ENCODE measurements at regions of chr11 and their contacts with region 1.

Region 1: DNA sequence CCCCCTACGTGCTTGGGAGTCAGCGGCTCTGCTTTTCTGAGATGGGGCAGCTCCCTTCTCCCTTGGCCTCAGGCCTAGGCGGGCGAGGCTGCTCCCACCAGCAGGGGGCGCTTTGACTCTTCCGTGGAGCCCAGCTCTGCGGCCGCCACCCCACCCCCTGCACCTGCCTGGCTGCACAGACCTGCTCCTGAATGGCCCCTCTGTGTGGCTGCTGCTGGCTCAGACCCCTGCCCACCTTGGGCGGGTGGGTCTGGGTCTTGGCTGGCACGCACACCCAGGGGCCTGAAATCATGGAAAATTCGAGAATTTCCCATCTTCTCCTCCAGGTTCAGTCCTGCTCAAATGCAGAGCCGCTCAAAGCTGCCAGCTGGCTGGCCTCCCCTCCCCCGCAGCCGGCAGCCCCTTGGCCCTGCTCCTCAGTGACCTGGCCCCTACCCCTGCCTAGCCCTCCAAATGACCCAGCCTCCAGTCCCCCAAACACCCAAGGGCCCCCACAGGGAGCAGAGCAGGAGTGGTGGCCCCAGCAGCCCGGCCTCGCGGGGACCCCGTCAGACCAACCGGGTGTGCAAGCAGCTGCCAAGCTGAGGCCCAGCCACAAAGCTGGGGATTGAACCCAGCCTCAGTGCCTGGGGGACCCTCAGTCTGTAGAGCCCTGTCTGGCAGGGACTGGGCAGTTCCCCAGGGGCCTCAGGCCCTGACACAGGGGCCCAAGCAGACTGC is 9.0 kb downstream of the PRR33 start:
- DNase-seq: peak; percentile 73 to 89
- ATAC-seq: peak; percentile 85 to 97
- H3K4me3 ChIP-seq: no peak overlapping the region
- H3K27ac ChIP-seq: no peak overlapping the region; a peak in 1 of 6 replicates
- H3K4me1 ChIP-seq: no peaks in the 10 kb centered on the region
- CTCF ChIP-seq: peak; percentile 81
- EP300 ChIP-seq: no peak
- POLR2A ChIP-seq: no peak
- RAD21 ChIP-seq: peak; percentile 87 to 89

Region 2: GRCh38 chr11:1837171-1838076 is 45.3 kb before region 1 on chr11:
- CTCF ChIA-PET with region 1: interaction called, 36 read pairs
- POLR2A ChIA-PET with region 1: no interaction called
- DNase-seq: peak; percentile 59 to 70
- ATAC-seq: peak; percentile 46 to 87
- H3K4me3 ChIP-seq: no peak overlapping the region
- H3K27ac ChIP-seq: peak overlapping the region in 1 of 2 experiments; percentile 73; a peak in 3 of 6 replicates
- H3K4me1 ChIP-seq: peaks cover 24% of the 10 kb centered on the region
- CTCF ChIP-seq: peak; percentile 89
- EP300 ChIP-seq: no peak
- POLR2A ChIP-seq: no peak
- RAD21 ChIP-seq: peak; percentile 93 to 97

Region 3: GRCh38 chr11:1852877-1853276 is 29.8 kb before region 1 on chr11 and contains the start of gene LSP1:
- CTCF ChIA-PET with region 1: interaction called, 30 read pairs
- POLR2A ChIA-PET with region 1: no interaction called
- DNase-seq: no peak
- ATAC-seq: no peak
- H3K4me3 ChIP-seq: no peak within 1 kb of the TSS
- H3K27ac ChIP-seq: no peak within 1 kb of the TSS
- H3K4me1 ChIP-seq: no peaks in the 10 kb centered on the region
- CTCF ChIP-seq: no peak
- EP300 ChIP-seq: no peak
- POLR2A ChIP-seq: no peak
- RAD21 ChIP-seq: no peak
- polyA plus RNA-seq, gene LSP1: 0.42 and 0.67 TPM in 2 replicates

Region 4: GRCh38 chr11:1896923-1897322 is 14.2 kb after region 1 on chr11:
- CTCF ChIA-PET with region 1: interaction called, 18 read pairs
- POLR2A ChIA-PET with region 1: no interaction called
- DNase-seq: no peak
- ATAC-seq: no peak
- H3K4me3 ChIP-seq: no peak overlapping the region
- H3K27ac ChIP-seq: no peak overlapping the region
- H3K4me1 ChIP-seq: no peaks in the 10 kb centered on the region
- CTCF ChIP-seq: no peak
- EP300 ChIP-seq: no peak
- POLR2A ChIP-seq: no peak
- RAD21 ChIP-seq: no peak

Region 5: DNA sequence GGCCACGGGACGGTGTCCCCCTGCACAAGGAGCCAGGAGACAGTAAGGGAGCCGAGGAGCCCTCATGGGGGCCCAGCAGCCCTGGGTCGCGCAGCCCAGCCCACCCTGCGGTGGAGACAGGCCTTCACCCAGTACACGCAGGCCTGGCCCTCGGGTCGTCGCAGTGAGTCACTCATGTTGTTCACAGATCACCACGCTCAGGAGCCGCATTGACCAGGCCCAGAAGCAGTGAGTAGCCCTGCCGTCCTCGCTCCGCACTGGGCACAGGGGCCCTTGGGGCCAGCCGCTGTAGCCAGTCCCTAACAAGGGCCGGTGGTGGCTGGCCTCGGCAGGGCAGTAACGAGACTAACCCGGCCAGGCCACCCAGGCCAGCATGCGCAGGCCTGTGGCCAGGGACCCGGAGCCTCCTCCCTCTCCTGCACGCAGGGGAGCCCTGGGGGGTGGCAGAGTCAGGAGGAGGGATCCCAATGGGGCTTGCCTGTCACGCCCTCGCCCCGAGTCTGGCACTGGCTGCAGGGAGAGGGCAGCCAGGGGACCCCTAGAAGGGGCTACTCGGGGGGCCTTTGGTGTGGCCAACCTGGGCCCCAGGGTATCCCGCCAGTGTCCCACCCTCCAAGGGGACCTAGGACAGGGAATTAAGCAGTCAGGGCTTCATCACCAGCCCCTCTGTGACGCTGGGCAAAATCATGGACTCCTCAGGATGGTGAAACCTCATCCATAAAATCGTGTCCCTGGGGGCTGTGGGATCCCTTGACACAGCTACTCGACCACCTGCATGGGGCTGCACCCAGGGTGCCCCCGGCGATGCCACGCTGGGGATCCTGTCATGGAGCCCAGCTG is 54.3 kb after region 1 on chr11:
- CTCF ChIA-PET with region 1: interaction called, 11 read pairs
- POLR2A ChIA-PET with region 1: no interaction called
- DNase-seq: no peak
- ATAC-seq: peak; percentile 29 to 40; a peak in 3 of 6 replicates
- H3K4me3 ChIP-seq: no peak overlapping the region
- H3K27ac ChIP-seq: no peak overlapping the region
- H3K4me1 ChIP-seq: no peaks in the 10 kb centered on the region
- CTCF ChIP-seq: no peak
- EP300 ChIP-seq: no peak
- POLR2A ChIP-seq: no peak
- RAD21 ChIP-seq: no peak

Region 6: GRCh38 chr11:1953489-1954266 is 71.0 kb after region 1 on chr11:
- CTCF ChIA-PET with region 1: interaction called, 49 read pairs
- POLR2A ChIA-PET with region 1: no interaction called
- DNase-seq: no peak
- ATAC-seq: peak; percentile 86 to 95
- H3K4me3 ChIP-seq: no peak overlapping the region
- H3K27ac ChIP-seq: no peak overlapping the region
- H3K4me1 ChIP-seq: no peaks in the 10 kb centered on the region
- CTCF ChIP-seq: peak; percentile 22; the same call in 2 of the 3 replicates
- EP300 ChIP-seq: no peak
- POLR2A ChIP-seq: no peak
- RAD21 ChIP-seq: no peak

Region 7: DNA sequence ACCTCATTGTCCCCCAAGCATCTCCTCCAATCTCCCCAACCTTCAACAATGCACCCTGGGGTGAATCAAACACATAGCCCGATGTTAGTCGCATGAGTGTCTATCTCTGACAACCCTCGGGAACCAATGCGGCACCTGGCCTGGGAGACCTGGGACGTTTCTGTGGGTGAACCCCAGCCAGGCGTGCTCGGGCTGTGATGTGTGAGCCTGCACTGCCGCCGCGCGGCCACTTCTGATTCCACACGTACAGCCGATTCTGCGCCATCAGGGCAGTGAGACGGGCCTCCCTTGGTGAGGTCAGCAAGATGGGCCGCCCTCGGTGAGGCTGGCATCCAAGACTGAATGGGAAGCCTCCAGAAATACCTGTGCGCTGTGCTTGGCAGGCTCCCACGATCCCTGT is 120.1 kb after region 1 on chr11:
- CTCF ChIA-PET with region 1: interaction called, 20 read pairs
- POLR2A ChIA-PET with region 1: interaction called, 6 read pairs
- DNase-seq: no peak
- ATAC-seq: peak; percentile 49 to 72; a peak in 4 of 6 replicates
- H3K4me3 ChIP-seq: no peak overlapping the region
- H3K27ac ChIP-seq: no peak overlapping the region
- H3K4me1 ChIP-seq: no peaks in the 10 kb centered on the region
- CTCF ChIP-seq: no peak
- EP300 ChIP-seq: no peak
- POLR2A ChIP-seq: no peak
- RAD21 ChIP-seq: no peak

Measured in A549 (cell line).